CD8-positive, alpha-beta T cell (primary cell): ENCODE measurements at regions of chr19 and their contacts with region 1.

Region 1: GRCh38 chr19:48668332-48668731 is 4.5 kb downstream of the NTN5 start:
- DNase-seq: no peak
- ATAC-seq: no peak
- H3K4me3 ChIP-seq: no peak overlapping the region
- H3K4me3 Mint-ChIP-seq: no peak overlapping the region
- H3K27ac ChIP-seq: no peak overlapping the region
- H3K27ac Mint-ChIP-seq: no peak overlapping the region
- H3K4me1 ChIP-seq: no peaks in the 10 kb centered on the region
- H3K4me1 Mint-ChIP-seq: no peaks in the 10 kb centered on the region
- H3K27me3 ChIP-seq: no peaks in the 10 kb centered on the region
- H3K27me3 Mint-ChIP-seq: no peaks in the 10 kb centered on the region
- CTCF ChIP-seq: no peak

Region 2: DNA sequence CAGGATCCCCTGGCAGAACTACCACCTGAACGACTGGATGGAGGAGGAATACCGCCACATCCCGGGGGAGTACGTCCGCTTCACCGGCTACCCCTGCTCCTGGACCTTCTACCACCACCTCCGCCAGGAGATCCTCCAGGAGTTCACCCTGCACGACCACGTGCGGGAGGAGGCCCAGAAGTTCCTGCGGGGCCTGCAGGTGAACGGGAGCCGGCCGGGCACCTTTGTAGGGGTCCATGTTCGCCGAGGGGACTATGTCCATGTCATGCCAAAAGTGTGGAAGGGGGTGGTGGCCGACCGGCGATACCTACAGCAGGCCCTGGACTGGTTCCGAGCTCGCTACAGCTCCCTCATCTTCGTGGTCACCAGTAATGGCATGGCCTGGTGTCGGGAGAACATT is 35.0 kb after region 1 on chr19:
- CTCF ChIA-PET with region 1: no interaction called
- POLR2A ChIA-PET with region 1: no interaction called
- intact Hi-C with region 1: loop called in 1 of 2 experiments (anchors 5 kb)
- DNase-seq: no peak
- ATAC-seq: no peak
- H3K4me3 ChIP-seq: no peak overlapping the region
- H3K4me3 Mint-ChIP-seq: no peak overlapping the region
- H3K27ac ChIP-seq: no peak overlapping the region
- H3K27ac Mint-ChIP-seq: no peak overlapping the region
- H3K4me1 ChIP-seq: no peaks in the 10 kb centered on the region
- H3K4me1 Mint-ChIP-seq: no peaks in the 10 kb centered on the region
- H3K27me3 ChIP-seq: no peaks in the 10 kb centered on the region
- H3K27me3 Mint-ChIP-seq: peaks cover 7% of the 10 kb centered on the region
- CTCF ChIP-seq: no peak